GM12878 (cell line): ENCODE measurements at regions of chr1 and their contacts with region 1.

Region 1: DNA sequence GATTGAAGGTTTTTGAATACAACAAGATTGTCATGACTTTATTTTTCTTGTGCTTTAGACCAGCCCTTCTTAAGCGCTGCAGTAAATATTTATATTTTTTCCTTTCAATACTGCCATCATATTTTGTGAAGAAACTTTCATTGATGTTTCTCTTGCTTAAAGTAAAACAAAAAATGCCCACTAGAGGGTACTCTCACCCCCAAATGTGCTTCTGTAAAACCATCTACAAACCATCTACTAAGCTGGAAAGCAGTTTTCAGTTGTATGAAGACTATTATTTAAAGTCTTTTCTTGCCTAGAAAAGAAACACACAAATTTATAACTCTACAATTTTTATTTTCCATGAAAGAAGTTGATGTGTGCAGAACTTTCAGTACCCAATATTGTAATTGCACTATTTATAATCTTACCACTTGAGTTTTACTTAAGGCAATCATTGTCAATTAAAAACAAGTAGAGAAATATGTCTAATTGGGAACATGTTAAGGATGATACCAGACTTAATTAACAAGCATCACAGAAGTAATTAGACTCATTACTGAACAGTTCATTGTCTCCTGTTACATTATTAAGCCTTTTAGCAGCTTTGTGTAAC is 10.7 kb downstream of the LEPR start:
- DNase-seq: no peak
- ATAC-seq: peak; percentile 73
- H3K4me3 ChIP-seq: no peak overlapping the region
- H3K27ac ChIP-seq: no peak overlapping the region
- H3K4me1 ChIP-seq: no peaks in the 10 kb centered on the region
- H3K27me3 ChIP-seq: no peaks in the 10 kb centered on the region
- CTCF ChIP-seq: peak; percentile 51 to 59 (median 53)
- EP300 ChIP-seq: no peak
- POLR2A ChIP-seq: no peak
- RAD21 ChIP-seq: peak; percentile 52

Region 2: DNA sequence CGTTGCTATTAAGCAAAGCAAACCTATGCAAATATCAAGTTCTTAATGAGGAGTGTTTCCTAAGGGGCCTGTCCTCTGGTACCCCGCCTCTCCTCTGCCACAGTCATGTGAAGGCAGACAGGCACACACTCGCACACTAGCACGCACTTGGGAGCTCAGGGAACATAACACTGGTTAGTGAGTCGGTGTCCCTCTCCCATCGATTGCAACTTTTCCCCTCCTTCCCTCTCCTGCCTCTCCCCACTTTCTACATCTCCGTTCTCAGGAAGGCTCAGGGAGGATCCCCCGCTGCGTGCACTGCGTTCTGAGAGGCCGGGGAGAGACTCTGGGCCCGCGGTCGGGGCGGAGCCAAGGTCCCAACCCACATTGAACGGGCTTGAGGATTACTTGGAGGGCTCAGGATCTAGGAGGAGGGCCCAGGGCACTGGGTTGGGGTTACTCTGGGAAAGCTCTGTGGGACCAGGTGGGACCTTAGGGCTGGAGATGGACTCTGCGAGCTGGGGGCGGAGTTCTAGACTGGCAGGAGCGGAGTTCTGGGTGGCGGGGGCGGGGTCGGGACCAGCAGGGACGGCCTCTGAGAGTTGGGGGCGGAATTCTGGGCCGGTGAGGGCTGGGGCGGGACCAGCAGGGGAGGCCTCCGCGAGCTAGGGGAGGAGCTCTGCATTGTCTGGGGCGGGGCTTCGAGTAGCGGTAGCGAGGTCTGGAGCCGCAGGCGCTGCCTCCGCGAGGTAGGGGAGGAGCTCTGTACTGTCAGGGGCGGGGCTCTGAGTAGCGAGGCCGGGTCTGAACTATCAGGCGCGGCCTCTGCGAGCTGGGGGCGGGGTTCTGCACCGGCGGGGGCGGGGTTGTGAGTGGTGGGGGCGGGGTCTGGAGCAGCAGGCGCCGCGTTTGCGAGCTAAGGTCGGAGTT is 11.3 kb before region 1 on chr1:
- CTCF ChIA-PET with region 1: interaction called, 41 read pairs
- POLR2A ChIA-PET with region 1: interaction called, 4 read pairs
- RAD21 ChIA-PET with region 1: interaction called, 4 read pairs
- SMC1A ChIA-PET with region 1: interaction called, 7 read pairs
- in situ Hi-C with region 1: no loop called
- intact Hi-C with region 1: no loop called
- DNase-seq: peak; percentile 87
- ATAC-seq: peak; percentile 95
- H3K4me3 ChIP-seq: peak overlapping the region; percentile 96
- H3K27ac ChIP-seq: peak overlapping the region; percentile 84
- H3K4me1 ChIP-seq: peaks cover 6% of the 10 kb centered on the region
- H3K27me3 ChIP-seq: no peaks in the 10 kb centered on the region
- CTCF ChIP-seq: no peak
- EP300 ChIP-seq: no peak; a peak in 1 of 4 replicates
- POLR2A ChIP-seq: peak; percentile 71
- RAD21 ChIP-seq: no peak

Region 3: DNA sequence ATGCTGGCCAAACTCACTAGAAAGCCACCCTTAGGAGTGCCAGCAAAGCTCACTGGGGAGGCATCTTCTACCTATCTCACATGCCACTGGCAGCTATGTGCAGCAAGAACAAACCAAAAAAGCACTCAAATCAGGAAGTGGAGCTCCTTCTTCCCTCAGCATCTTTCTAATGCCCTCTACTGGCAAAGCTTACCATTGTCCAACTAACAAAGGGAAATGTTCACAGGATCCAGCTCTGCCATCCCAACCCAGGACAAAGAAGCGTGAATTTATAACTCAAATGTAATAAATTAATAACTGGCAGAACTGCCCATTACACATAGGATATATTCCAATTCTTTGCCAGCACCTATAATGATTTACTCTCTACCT is 28.2 kb after region 1 on chr1:
- CTCF ChIA-PET with region 1: interaction called, 21 read pairs
- POLR2A ChIA-PET with region 1: no interaction called
- RAD21 ChIA-PET with region 1: interaction called, 4 read pairs
- SMC1A ChIA-PET with region 1: interaction called, 13 read pairs
- in situ Hi-C with region 1: no loop called
- intact Hi-C with region 1: no loop called
- DNase-seq: peak; percentile 4
- ATAC-seq: peak; percentile 75
- H3K4me3 ChIP-seq: no peak overlapping the region
- H3K27ac ChIP-seq: no peak overlapping the region
- H3K4me1 ChIP-seq: no peaks in the 10 kb centered on the region
- H3K27me3 ChIP-seq: no peaks in the 10 kb centered on the region
- CTCF ChIP-seq: peak; percentile 53 to 66 (median 57); a peak in 5 of 6 replicates
- EP300 ChIP-seq: no peak
- POLR2A ChIP-seq: no peak
- RAD21 ChIP-seq: peak; percentile 54

Region 4: DNA sequence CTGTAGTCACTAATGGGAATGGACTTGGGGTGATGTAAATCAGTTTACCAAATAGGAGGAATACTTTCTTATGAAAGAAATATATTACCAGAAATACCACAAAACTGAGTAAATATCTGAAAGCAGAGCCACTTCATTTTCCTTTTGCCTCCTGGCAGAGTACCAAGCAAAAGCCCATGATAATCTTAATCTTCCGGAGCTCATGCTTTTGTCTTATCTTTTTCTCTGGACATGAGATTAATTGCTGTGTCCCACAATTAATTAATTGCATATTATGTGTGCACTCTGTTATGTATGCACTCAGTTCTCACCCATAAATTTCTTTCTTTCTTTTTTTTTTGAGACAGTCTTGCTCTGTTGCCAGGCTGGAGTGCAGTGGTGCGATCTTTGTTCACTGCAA is 267.4 kb after region 1 on chr1:
- CTCF ChIA-PET with region 1: no interaction called
- POLR2A ChIA-PET with region 1: no interaction called
- RAD21 ChIA-PET with region 1: no interaction called
- SMC1A ChIA-PET with region 1: no interaction called
- in situ Hi-C with region 1: no loop called
- intact Hi-C with region 1: no loop called
- DNase-seq: no peak
- ATAC-seq: no peak
- H3K4me3 ChIP-seq: no peak overlapping the region
- H3K27ac ChIP-seq: no peak overlapping the region
- H3K4me1 ChIP-seq: no peaks in the 10 kb centered on the region
- H3K27me3 ChIP-seq: no peaks in the 10 kb centered on the region; a peak in 1 of 4 replicates
- CTCF ChIP-seq: no peak
- EP300 ChIP-seq: no peak
- POLR2A ChIP-seq: no peak
- RAD21 ChIP-seq: no peak

Region 5: GRCh38 chr1:65762081-65762862 is 331.1 kb after region 1 on chr1:
- CTCF ChIA-PET with region 1: no interaction called
- POLR2A ChIA-PET with region 1: no interaction called
- RAD21 ChIA-PET with region 1: no interaction called
- SMC1A ChIA-PET with region 1: no interaction called
- in situ Hi-C with region 1: no loop called
- intact Hi-C with region 1: no loop called
- DNase-seq: no peak
- ATAC-seq: no peak
- H3K4me3 ChIP-seq: no peak overlapping the region
- H3K27ac ChIP-seq: no peak overlapping the region
- H3K4me1 ChIP-seq: no peaks in the 10 kb centered on the region
- H3K27me3 ChIP-seq: no peaks in the 10 kb centered on the region
- CTCF ChIP-seq: no peak
- EP300 ChIP-seq: no peak
- POLR2A ChIP-seq: no peak
- RAD21 ChIP-seq: no peak